ENCODE measurements at regions of chr15 and their contacts with region 1.

Region 1: DNA sequence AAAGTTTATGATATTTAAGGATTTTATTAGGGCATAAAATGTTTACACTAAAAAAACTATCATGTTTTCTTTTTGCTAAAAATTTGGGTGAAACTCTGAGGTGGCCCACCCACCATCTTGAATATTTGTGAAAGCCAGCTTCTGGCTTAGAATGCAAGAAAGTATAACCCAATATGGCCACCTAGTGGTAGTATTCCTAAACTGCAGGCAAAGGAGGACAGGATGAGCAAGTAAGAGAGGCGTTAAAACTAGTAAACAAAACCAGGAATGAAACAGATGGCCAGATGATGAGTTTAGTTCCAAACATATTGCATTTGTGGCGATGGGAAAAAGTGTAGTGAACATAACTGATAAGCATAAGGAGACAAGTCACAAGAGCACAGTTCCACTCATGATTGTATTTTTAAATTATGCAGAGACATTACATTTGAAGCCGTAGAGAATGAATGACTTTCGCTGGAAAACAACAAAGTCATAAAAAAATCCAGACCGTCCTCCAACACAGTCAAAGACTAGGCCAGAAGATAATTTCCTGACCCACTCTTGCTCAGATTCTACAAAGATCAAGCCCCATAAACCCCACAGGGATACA is 103.3 kb upstream of the PRTG start:
- DNase-seq: peak; percentile 23
- H3K4me3 ChIP-seq: no peak overlapping the region
- H3K27ac ChIP-seq: no peak overlapping the region
- H3K4me1 ChIP-seq: no peaks in the 10 kb centered on the region
- H3K27me3 ChIP-seq: no peaks in the 10 kb centered on the region
- CTCF ChIP-seq: peak; percentile 82 to 90 (median 85)
- EP300 ChIP-seq: no peak
- POLR2A ChIP-seq: no peak

Region 2: GRCh38 chr15:55649054-55649423 is 197.2 kb before region 1 on chr15:
- in situ Hi-C with region 1: loop called in 2 of 4 experiments (anchors 5 to 25 kb)
- intact Hi-C with region 1: loop called (anchors 5 kb)
- DNase-seq: no peak
- H3K4me3 ChIP-seq: no peak overlapping the region
- H3K27ac ChIP-seq: no peak overlapping the region
- H3K4me1 ChIP-seq: no peaks in the 10 kb centered on the region
- H3K27me3 ChIP-seq: no peaks in the 10 kb centered on the region
- CTCF ChIP-seq: no peak
- EP300 ChIP-seq: no peak
- POLR2A ChIP-seq: no peak

Region 3: GRCh38 chr15:55661428-55661827 is 184.8 kb before region 1 on chr15:
- in situ Hi-C with region 1: loop called in 1 of 4 experiments (anchors 25 kb)
- intact Hi-C with region 1: no loop called
- DNase-seq: no peak
- H3K4me3 ChIP-seq: no peak overlapping the region
- H3K27ac ChIP-seq: no peak overlapping the region
- H3K4me1 ChIP-seq: no peaks in the 10 kb centered on the region
- H3K27me3 ChIP-seq: no peaks in the 10 kb centered on the region
- CTCF ChIP-seq: no peak
- EP300 ChIP-seq: no peak
- POLR2A ChIP-seq: no peak

Measured in transverse colon (tissue), 4 donors.